ENCODE measurements at regions of chr9 and their contacts with region 1.

Region 1: GRCh38 chr9:133485361-133486260 is 6.7 kb upstream of the SLC2A6 start:
- DNase-seq: peak in 4 of 14 experiments; percentile 15 to 45 (median 28)
- ATAC-seq: peak; percentile 12
- H3K4me3 ChIP-seq: no peak overlapping the region
- H3K4me3 Mint-ChIP-seq: no peak overlapping the region
- H3K27ac ChIP-seq: no peak overlapping the region
- H3K27ac Mint-ChIP-seq: no peak overlapping the region
- H3K4me1 ChIP-seq: peaks cover 6% of the 10 kb centered on the region
- H3K4me1 Mint-ChIP-seq: peaks cover 6% of the 10 kb centered on the region
- H3K27me3 ChIP-seq: no peaks in the 10 kb centered on the region
- H3K27me3 Mint-ChIP-seq: no peaks in the 10 kb centered on the region
- CTCF ChIP-seq: no peak

Region 2: GRCh38 chr9:133023117-133023890 is 462.3 kb before region 1 on chr9:
- CTCF ChIA-PET with region 1: no interaction called
- POLR2A ChIA-PET with region 1: no interaction called
- intact Hi-C with region 1: loop called in 1 of 2 experiments (anchors 2 kb)
- DNase-seq: peak in 10 of 14 experiments; percentile 12 to 59 (median 36)
- ATAC-seq: no peak
- H3K4me3 ChIP-seq: no peak overlapping the region
- H3K4me3 Mint-ChIP-seq: no peak overlapping the region
- H3K27ac ChIP-seq: no peak overlapping the region
- H3K27ac Mint-ChIP-seq: no peak overlapping the region
- H3K4me1 ChIP-seq: peaks cover 14% of the 10 kb centered on the region
- H3K4me1 Mint-ChIP-seq: peaks cover 10% of the 10 kb centered on the region
- H3K27me3 ChIP-seq: no peaks in the 10 kb centered on the region
- H3K27me3 Mint-ChIP-seq: peaks cover 5% of the 10 kb centered on the region
- CTCF ChIP-seq: no peak

Region 3: DNA sequence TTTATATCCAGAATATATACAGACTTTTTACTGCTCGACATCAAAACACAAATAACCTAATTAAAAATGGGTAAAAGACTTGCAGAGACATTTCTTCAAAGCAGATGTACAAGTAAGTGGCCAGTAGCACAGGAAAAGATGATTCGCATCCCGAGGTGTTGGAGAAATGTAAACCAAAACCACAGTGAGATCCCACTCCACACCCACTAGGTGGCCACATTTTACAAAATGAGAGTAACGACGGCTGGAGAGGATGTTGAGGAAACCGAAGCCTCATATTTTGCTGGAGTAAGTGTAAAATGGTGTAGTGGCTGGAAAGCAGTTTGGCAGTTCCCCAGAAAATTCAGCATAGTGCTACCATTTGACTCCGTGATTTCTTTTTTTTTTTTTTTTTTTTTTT is 300.6 kb before region 1 on chr9:
- CTCF ChIA-PET with region 1: interaction called, 3 read pairs
- POLR2A ChIA-PET with region 1: interaction called, 3 read pairs
- intact Hi-C with region 1: loop called (anchors 1 kb)
- DNase-seq: peak in 7 of 14 experiments; percentile 16 to 70 (median 42)
- ATAC-seq: peak; percentile 58
- H3K4me3 ChIP-seq: no peak overlapping the region
- H3K4me3 Mint-ChIP-seq: peak overlapping the region; percentile 12
- H3K27ac ChIP-seq: no peak overlapping the region
- H3K27ac Mint-ChIP-seq: no peak overlapping the region
- H3K4me1 ChIP-seq: peaks cover 12% of the 10 kb centered on the region
- H3K4me1 Mint-ChIP-seq: peaks cover 19% of the 10 kb centered on the region
- H3K27me3 ChIP-seq: peaks cover 8 to 14% of the 10 kb centered on the region in 2 experiments
- H3K27me3 Mint-ChIP-seq: peaks cover 31% of the 10 kb centered on the region
- CTCF ChIP-seq: peak; percentile 55

Region 4: GRCh38 chr9:133238851-133239532 is 246.6 kb before region 1 on chr9:
- CTCF ChIA-PET with region 1: no interaction called
- POLR2A ChIA-PET with region 1: no interaction called
- intact Hi-C with region 1: loop called (anchors 1 kb)
- DNase-seq: peak; percentile 32 to 80 (median 61)
- ATAC-seq: peak; percentile 91
- H3K4me3 ChIP-seq: peak overlapping the region; percentile 30
- H3K4me3 Mint-ChIP-seq: peak overlapping the region; percentile 56
- H3K27ac ChIP-seq: no peak overlapping the region
- H3K27ac Mint-ChIP-seq: no peak overlapping the region
- H3K4me1 ChIP-seq: peaks cover 13% of the 10 kb centered on the region
- H3K4me1 Mint-ChIP-seq: peaks cover 10% of the 10 kb centered on the region
- H3K27me3 ChIP-seq: peaks cover 4 to 15% of the 10 kb centered on the region in 2 experiments
- H3K27me3 Mint-ChIP-seq: peaks cover 31% of the 10 kb centered on the region
- CTCF ChIP-seq: peak; percentile 62

Region 5: GRCh38 chr9:133347985-133348717 is 137.5 kb before region 1 on chr9 and contains the starts of genes MED22 and RPL7A:
- CTCF ChIA-PET with region 1: interaction called, 3 read pairs
- POLR2A ChIA-PET with region 1: no interaction called
- intact Hi-C with region 1: loop called in 1 of 2 experiments (anchors 5 kb)
- DNase-seq: peak; percentile 83 to 97 (median 88)
- ATAC-seq: peak; percentile 90
- H3K4me3 ChIP-seq: peak within 1 kb of the TSS; percentile 88
- H3K4me3 Mint-ChIP-seq: peak within 1 kb of the TSS; percentile 96
- H3K27ac ChIP-seq: peak within 1 kb of the TSS; percentile 84 to 91
- H3K27ac Mint-ChIP-seq: peak within 1 kb of the TSS; percentile 85
- H3K4me1 ChIP-seq: peaks cover 50% of the 10 kb centered on the region
- H3K4me1 Mint-ChIP-seq: peaks cover 39% of the 10 kb centered on the region
- H3K27me3 ChIP-seq: no peaks in the 10 kb centered on the region
- H3K27me3 Mint-ChIP-seq: no peaks in the 10 kb centered on the region
- CTCF ChIP-seq: no peak
- total RNA-seq, gene MED22: 15.7 to 18.0 TPM
- total RNA-seq, gene RPL7A: 2,613 to 2,686 TPM

Region 6: GRCh38 chr9:133406480-133407307 is 78.9 kb before region 1 on chr9:
- CTCF ChIA-PET with region 1: no interaction called
- POLR2A ChIA-PET with region 1: no interaction called
- intact Hi-C with region 1: loop called (anchors 1 kb)
- DNase-seq: peak; percentile 68 to 89 (median 74)
- ATAC-seq: peak; percentile 93
- H3K4me3 ChIP-seq: no peak overlapping the region
- H3K4me3 Mint-ChIP-seq: no peak overlapping the region
- H3K27ac ChIP-seq: no peak overlapping the region
- H3K27ac Mint-ChIP-seq: peak overlapping the region; percentile 73
- H3K4me1 ChIP-seq: peaks cover 9% of the 10 kb centered on the region
- H3K4me1 Mint-ChIP-seq: peaks cover 6% of the 10 kb centered on the region
- H3K27me3 ChIP-seq: no peaks in the 10 kb centered on the region
- H3K27me3 Mint-ChIP-seq: no peaks in the 10 kb centered on the region
- CTCF ChIP-seq: peak; percentile 91

Region 7: DNA sequence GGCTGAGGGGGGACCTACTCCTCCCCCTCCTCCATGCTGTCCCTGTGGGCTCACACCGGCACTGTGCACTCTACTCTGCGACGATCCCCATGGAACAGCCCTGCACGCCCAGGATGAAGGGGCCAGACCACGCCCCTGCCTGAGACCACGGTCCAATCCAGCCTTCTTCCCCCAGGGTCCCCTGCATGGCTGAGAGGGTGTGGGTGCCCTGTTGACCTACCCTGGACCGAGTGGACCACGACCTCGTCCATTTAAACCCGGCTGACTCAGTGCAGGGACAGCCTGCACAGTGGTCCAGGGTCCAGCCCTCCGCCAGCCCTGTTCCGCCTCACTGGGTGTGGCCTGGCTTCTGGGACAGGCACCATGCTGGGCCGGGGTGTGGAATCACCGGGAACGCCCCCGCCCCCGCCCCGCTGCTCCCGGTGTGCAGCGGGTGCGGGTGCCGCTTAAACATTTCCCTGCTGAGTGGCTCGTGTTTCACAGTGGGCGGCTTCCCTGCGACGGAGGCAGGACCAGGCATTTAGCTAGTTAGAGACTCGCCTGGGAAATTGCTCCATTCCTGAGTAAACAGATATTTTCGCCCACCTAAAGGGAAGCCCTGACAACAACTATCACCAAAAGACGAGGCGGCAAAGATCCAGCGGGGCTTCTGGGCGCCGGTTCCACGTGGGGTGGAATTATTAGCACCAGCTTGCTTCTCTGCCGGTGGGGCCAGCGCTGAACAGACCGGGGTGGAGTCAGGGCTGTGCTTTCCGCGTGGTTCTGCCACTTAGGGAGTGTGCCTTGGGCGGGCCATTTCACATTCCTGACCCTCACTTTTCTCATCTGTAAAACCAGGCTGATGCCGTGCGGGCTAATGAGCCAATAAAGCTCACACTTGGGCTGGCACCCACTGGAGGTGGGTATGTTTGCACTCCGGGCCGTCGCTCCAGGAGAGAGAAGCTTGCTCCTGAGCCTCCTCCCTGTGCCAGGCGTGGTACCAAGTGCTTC is 173.1 kb after region 1 on chr9:
- CTCF ChIA-PET with region 1: no interaction called
- POLR2A ChIA-PET with region 1: no interaction called
- intact Hi-C with region 1: no loop called
- DNase-seq: peak in 4 of 14 experiments; percentile 7 to 38 (median 26)
- ATAC-seq: no peak
- H3K4me3 ChIP-seq: no peak overlapping the region
- H3K4me3 Mint-ChIP-seq: peak overlapping the region; percentile 69
- H3K27ac ChIP-seq: no peak overlapping the region
- H3K27ac Mint-ChIP-seq: peak overlapping the region; percentile 93
- H3K4me1 ChIP-seq: peaks cover 50% of the 10 kb centered on the region
- H3K4me1 Mint-ChIP-seq: peaks cover 47% of the 10 kb centered on the region
- H3K27me3 ChIP-seq: peaks cover 5 to 18% of the 10 kb centered on the region in 2 experiments
- H3K27me3 Mint-ChIP-seq: peaks cover 33% of the 10 kb centered on the region
- CTCF ChIP-seq: no peak

Region 8: DNA sequence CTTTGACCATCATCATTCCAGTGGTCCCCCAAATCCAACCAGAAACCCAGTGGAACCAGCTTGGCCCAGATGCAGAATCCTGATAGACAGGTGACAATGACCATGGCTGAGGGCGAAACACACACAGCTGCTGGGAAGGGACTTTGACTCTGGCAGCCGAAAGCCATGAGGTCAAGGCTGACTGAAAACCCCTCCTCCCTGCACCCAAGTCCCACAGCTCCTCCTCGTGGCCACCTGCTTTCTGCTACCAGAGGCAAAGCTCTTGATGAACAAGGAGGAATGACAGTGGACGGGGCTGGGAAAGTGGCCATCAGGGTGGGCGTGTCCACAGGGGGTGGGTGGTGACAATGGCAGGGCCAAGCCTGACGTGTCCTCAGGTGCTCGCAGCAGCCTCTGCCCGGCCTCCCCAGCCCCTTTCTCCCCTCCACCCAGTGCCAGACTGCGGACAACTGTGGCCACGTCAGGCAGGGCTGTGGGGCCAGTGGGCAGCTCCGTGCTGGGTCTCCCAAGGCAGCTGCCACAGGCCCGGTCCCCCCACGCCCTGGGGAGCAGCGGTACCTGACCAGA is 283.3 kb after region 1 on chr9:
- CTCF ChIA-PET with region 1: no interaction called
- POLR2A ChIA-PET with region 1: no interaction called
- intact Hi-C with region 1: no loop called
- DNase-seq: peak in 1 of 14 experiments; percentile 29
- ATAC-seq: no peak
- H3K4me3 ChIP-seq: no peak overlapping the region
- H3K4me3 Mint-ChIP-seq: no peak overlapping the region
- H3K27ac ChIP-seq: no peak overlapping the region
- H3K27ac Mint-ChIP-seq: no peak overlapping the region
- H3K4me1 ChIP-seq: no peaks in the 10 kb centered on the region
- H3K4me1 Mint-ChIP-seq: no peaks in the 10 kb centered on the region
- H3K27me3 ChIP-seq: no peaks in the 10 kb centered on the region
- H3K27me3 Mint-ChIP-seq: no peaks in the 10 kb centered on the region
- CTCF ChIP-seq: no peak